Stomach (tissue), 19 donors: ENCODE measurements at regions of chr16 and their contacts with region 1.

Region 1: DNA sequence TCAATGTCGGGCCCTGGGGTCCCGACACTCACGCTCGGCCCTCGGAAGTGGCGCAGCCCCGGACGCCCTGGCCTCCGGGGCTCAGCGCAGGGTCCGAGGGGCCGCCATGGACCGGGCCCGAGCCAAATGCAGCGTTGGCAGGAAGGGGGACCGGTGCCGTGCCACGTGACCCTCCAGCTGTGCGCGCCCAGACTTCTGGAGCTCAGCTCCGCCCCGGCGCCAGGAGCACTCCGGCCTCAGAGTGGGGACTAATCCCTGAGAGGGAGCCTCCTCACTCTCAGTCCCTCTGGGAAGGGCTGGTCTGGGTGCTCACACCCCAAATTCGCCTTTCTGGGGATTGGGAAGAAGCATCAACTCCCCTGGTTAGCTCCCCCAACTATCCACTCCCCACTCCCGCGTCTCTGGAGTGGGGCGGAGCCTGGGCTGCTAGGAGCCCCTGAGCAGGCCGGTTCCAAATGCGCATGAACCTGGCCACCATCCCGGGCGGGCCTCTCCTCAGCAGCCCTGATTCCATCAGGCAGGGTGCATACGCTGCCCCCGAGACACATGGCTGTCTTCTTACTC is at the start of gene B3GNT9:
- DNase-seq: peak; percentile 67 to 91
- H3K4me3 ChIP-seq: peak within 1 kb of the TSS; percentile 61 to 72 (median 63)
- H3K27ac ChIP-seq: peak within 1 kb of the TSS; percentile 75 to 91 (median 86)
- H3K4me1 ChIP-seq: peaks cover 20 to 45% (median 41%) of the 10 kb centered on the region in 4 donors
- H3K27me3 ChIP-seq: peaks cover 0 to 30% (median 0%) of the 10 kb centered on the region in 3 donors
- CTCF ChIP-seq: peak in 1 of 7 experiments; percentile 13
- EP300 ChIP-seq: no peak
- POLR2A ChIP-seq: no peak
- total RNA-seq, gene B3GNT9: 0.58 to 11.2 (median 4.3) TPM

Region 2: DNA sequence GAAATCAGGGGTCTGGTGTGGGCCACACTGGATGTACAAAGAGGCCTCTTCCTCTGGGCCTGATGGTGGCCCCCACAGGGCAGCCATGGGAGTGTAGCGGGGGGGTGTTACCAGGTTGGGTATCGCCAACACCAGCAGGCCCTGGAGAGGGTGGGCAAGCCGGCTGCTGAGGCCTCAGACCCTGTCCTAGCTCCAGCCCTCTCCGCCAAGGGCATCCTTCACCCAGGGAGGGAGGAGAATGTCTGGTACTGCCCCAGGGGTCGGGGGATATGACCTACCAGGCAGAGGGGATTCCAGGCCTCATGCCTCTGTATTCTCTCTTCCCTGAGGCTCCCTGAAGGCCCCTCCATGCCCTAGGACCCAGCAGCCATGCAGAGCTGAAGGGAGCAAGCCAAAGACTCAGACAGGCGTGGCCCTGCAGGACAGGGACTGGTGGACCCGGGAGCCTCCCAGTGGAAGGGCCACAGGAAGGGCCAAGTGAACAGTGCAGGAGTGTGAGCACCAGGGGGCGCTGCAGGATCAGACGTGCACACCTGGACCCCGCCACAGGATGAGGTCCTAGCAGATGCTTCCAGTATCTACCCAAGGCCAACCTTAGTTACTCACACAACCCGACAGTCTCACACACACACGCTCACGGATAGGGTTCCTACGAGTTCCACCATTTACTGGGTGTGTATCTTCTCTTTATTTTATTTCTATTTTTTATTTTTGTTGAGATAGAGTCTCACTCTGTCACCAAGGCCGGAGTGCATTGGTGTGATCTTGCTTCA is 173.4 kb before region 1 on chr16:
- intact Hi-C with region 1: loop called (anchors 5 kb)
- DNase-seq: peak; percentile 92 to 93
- H3K4me3 ChIP-seq: no peak overlapping the region
- H3K27ac ChIP-seq: no peak overlapping the region
- H3K4me1 ChIP-seq: peaks cover 0 to 17% (median 8%) of the 10 kb centered on the region in 4 donors
- H3K27me3 ChIP-seq: peaks cover 0 to 21% (median 0%) of the 10 kb centered on the region in 3 donors
- CTCF ChIP-seq: peak in 6 of 7 experiments; percentile 32 to 97 (median 95)
- EP300 ChIP-seq: no peak
- POLR2A ChIP-seq: no peak